Activated CD4-positive, alpha-beta T cell treated with anti-CD3 and anti-CD28 coated beads for 36 hours (primary cell): ENCODE measurements at regions of chr1 and their contacts with region 1.

Region 1: DNA sequence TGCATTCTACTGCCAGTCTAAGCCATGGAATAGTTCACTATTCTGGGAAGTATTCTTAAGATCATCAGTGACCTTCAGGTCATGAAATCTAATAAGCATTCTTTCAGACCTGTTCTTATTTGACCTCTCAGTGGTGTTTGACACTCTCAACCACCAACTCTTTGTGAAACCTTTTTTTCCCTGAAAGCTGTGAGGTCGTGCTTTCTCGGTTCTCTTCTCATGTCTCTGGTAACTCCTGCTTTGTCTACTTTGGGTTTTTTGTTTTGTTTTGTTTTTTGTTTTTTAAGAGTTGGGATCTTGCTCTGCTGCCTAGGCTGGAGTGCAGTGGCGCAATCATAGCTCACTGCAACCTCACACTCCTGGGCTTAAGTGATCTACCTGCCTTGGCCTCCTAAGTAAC is 56.3 kb downstream of the POU2F1 start:
- DNase-seq: peak; percentile 13
- ATAC-seq: peak; percentile 76
- H3K4me3 Mint-ChIP-seq: no peak overlapping the region
- H3K27ac Mint-ChIP-seq: no peak overlapping the region
- H3K4me1 Mint-ChIP-seq: peaks cover 60% of the 10 kb centered on the region
- H3K27me3 Mint-ChIP-seq: no peaks in the 10 kb centered on the region

Region 2: DNA sequence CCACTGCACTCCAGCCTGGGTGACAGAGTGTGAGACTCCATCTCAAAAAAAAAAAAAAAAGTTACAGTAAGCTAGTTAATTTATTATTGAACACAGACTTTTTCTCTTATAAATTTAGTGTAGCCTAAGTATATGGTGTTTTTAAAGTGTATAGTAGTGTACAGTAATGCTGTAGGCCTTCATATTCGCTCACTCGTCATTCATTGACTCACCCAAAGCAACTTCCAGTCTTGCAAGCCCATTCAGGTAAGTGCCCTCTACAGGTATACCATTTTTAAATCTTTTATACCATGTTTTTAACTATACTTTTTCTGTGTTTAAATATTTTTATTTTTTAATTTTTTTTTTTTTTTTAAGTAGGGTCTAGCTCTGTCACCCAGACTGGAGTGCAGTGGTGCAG is 44.2 kb before region 1 on chr1:
- CTCF ChIA-PET with region 1: interaction called, 3 read pairs
- POLR2A ChIA-PET with region 1: no interaction called
- intact Hi-C with region 1: loop called in 1 of 2 experiments (anchors 1 kb)
- DNase-seq: no peak
- ATAC-seq: no peak
- H3K4me3 Mint-ChIP-seq: no peak overlapping the region
- H3K27ac Mint-ChIP-seq: no peak overlapping the region
- H3K4me1 Mint-ChIP-seq: peaks cover 37% of the 10 kb centered on the region
- H3K27me3 Mint-ChIP-seq: no peaks in the 10 kb centered on the region

Region 3: GRCh38 chr1:167258858-167259257 is 18.1 kb before region 1 on chr1:
- CTCF ChIA-PET with region 1: interaction called, 4 read pairs
- POLR2A ChIA-PET with region 1: interaction called, 10 read pairs
- intact Hi-C with region 1: no loop called
- DNase-seq: no peak
- ATAC-seq: no peak
- H3K4me3 Mint-ChIP-seq: no peak overlapping the region
- H3K27ac Mint-ChIP-seq: no peak overlapping the region
- H3K4me1 Mint-ChIP-seq: peaks cover 38% of the 10 kb centered on the region
- H3K27me3 Mint-ChIP-seq: no peaks in the 10 kb centered on the region

Region 4: GRCh38 chr1:167291539-167292185 is 14.7 kb after region 1 on chr1:
- CTCF ChIA-PET with region 1: no interaction called
- POLR2A ChIA-PET with region 1: no interaction called
- intact Hi-C with region 1: loop called in 1 of 2 experiments (anchors 1 kb)
- DNase-seq: no peak
- ATAC-seq: no peak
- H3K4me3 Mint-ChIP-seq: no peak overlapping the region
- H3K27ac Mint-ChIP-seq: no peak overlapping the region
- H3K4me1 Mint-ChIP-seq: peaks cover 17% of the 10 kb centered on the region
- H3K27me3 Mint-ChIP-seq: no peaks in the 10 kb centered on the region

Region 5: GRCh38 chr1:167328816-167329483 is 52.0 kb after region 1 on chr1:
- CTCF ChIA-PET with region 1: no interaction called
- POLR2A ChIA-PET with region 1: no interaction called
- intact Hi-C with region 1: no loop called
- DNase-seq: peak; percentile 17
- ATAC-seq: no peak
- H3K4me3 Mint-ChIP-seq: no peak overlapping the region
- H3K27ac Mint-ChIP-seq: no peak overlapping the region
- H3K4me1 Mint-ChIP-seq: peaks cover 37% of the 10 kb centered on the region
- H3K27me3 Mint-ChIP-seq: no peaks in the 10 kb centered on the region

Region 6: GRCh38 chr1:167467126-167467710 is 190.2 kb after region 1 on chr1:
- CTCF ChIA-PET with region 1: no interaction called
- POLR2A ChIA-PET with region 1: no interaction called
- intact Hi-C with region 1: no loop called
- DNase-seq: no peak
- ATAC-seq: peak; percentile 79
- H3K4me3 Mint-ChIP-seq: no peak overlapping the region
- H3K27ac Mint-ChIP-seq: peak overlapping the region; percentile 62
- H3K4me1 Mint-ChIP-seq: peaks cover 86% of the 10 kb centered on the region
- H3K27me3 Mint-ChIP-seq: no peaks in the 10 kb centered on the region